Activated B cell treated with CpG ODN at 0.5 μM for 24 hours (primary cell): ENCODE measurements at regions of chr5 and their contacts with region 1.

Region 1: GRCh38 chr5:78984439-78985115 is 533 bp downstream of the ARSB start:
- DNase-seq: peak; percentile 83
- ATAC-seq: peak; percentile 55
- H3K4me3 Mint-ChIP-seq: peak overlapping the region; percentile 90
- H3K27ac Mint-ChIP-seq: peak overlapping the region; percentile 91
- H3K4me1 Mint-ChIP-seq: peaks cover 46% of the 10 kb centered on the region
- H3K27me3 Mint-ChIP-seq: no peaks in the 10 kb centered on the region
- CTCF ChIP-seq: no peak

Region 2: DNA sequence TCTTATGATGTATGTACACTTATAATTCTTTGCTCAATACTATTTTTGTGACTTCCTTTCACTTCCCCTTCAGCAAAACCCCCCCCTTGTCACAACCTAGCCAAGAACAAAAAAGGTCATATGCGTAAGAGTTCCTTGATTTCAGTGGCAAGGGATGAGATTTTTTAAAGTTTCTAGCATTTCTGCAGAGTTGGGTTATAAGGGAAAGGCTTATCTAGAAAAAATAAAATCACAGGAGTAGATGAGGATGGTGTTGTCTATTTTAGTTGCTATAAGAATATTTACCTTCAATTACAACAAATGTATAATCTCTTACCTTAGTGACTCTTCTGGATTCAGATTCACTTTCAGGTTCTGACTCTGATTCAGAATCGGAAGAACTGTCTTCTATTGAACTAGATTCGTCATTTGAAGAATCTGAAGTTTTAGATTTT is 874.7 kb before region 1 on chr5:
- CTCF ChIA-PET with region 1: no interaction called
- POLR2A ChIA-PET with region 1: no interaction called
- intact Hi-C with region 1: loop called (anchors 5 kb)
- DNase-seq: no peak
- ATAC-seq: peak; percentile 76
- H3K4me3 Mint-ChIP-seq: peak overlapping the region; percentile 75
- H3K27ac Mint-ChIP-seq: peak overlapping the region; percentile 87
- H3K4me1 Mint-ChIP-seq: peaks cover 69% of the 10 kb centered on the region
- H3K27me3 Mint-ChIP-seq: no peaks in the 10 kb centered on the region
- CTCF ChIP-seq: no peak

Region 3: GRCh38 chr5:78574731-78575161 is 409.8 kb before region 1 on chr5:
- CTCF ChIA-PET with region 1: no interaction called
- POLR2A ChIA-PET with region 1: interaction called, 10 read pairs
- intact Hi-C with region 1: no loop called
- DNase-seq: no peak
- ATAC-seq: peak; percentile 63
- H3K4me3 Mint-ChIP-seq: no peak overlapping the region
- H3K27ac Mint-ChIP-seq: peak overlapping the region; percentile 82
- H3K4me1 Mint-ChIP-seq: peaks cover 27% of the 10 kb centered on the region
- H3K27me3 Mint-ChIP-seq: no peaks in the 10 kb centered on the region
- CTCF ChIP-seq: no peak

Region 4: DNA sequence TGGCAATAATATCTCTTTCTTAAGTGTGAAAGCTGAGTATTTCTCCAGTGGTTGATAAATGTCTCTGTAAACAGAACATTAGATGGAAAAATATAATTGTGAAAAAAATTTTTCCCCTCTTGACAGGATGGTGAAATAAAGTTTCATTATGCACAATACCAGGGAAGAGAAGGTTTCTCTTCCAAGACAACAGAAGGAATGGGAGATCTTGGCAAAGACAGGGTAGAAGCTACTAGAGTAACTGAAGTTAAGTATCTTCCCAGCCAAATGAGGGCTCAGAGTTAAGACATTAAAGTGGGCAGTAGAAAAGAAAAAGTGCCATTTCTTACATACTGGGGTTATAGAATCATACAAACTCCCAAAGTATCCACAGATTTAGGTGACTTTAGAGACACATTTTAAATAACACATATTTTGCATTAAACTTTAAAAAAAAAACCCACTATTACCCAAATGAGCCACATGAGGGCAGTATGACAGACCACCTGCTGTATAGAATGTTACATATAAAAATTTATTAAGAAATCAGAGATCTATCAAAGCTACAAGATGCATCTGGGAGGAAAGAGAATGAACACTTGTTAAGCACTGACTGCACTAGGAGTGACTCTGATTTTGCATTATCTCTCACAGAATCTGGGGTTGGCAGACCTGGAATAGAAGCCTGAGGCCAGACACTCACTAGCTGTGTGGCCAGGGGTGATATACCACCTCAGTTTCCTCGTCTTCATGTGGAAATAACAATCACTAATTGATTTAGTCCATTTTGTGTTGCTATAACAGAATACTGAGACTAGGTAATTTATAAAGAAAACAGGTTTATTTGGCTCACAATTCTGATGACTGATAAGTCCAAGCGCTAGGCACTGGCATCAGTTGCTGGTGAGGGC is 98.0 kb before region 1 on chr5:
- CTCF ChIA-PET with region 1: no interaction called
- POLR2A ChIA-PET with region 1: interaction called, 3 read pairs
- intact Hi-C with region 1: loop called (anchors 5 kb)
- DNase-seq: no peak
- ATAC-seq: no peak
- H3K4me3 Mint-ChIP-seq: no peak overlapping the region
- H3K27ac Mint-ChIP-seq: peak overlapping the region; percentile 2
- H3K4me1 Mint-ChIP-seq: peaks cover 39% of the 10 kb centered on the region
- H3K27me3 Mint-ChIP-seq: no peaks in the 10 kb centered on the region
- CTCF ChIP-seq: peak; percentile 73

Region 5: GRCh38 chr5:79120216-79120615 is 135.6 kb after region 1 on chr5:
- CTCF ChIA-PET with region 1: no interaction called
- POLR2A ChIA-PET with region 1: no interaction called
- intact Hi-C with region 1: no loop called
- DNase-seq: no peak
- ATAC-seq: no peak
- H3K4me3 Mint-ChIP-seq: no peak overlapping the region
- H3K27ac Mint-ChIP-seq: no peak overlapping the region
- H3K4me1 Mint-ChIP-seq: no peaks in the 10 kb centered on the region
- H3K27me3 Mint-ChIP-seq: peaks cover 5% of the 10 kb centered on the region
- CTCF ChIP-seq: no peak

Region 6: GRCh38 chr5:79133657-79134451 is 149.3 kb after region 1 on chr5:
- CTCF ChIA-PET with region 1: interaction called, 5 read pairs
- POLR2A ChIA-PET with region 1: interaction called, 9 read pairs
- intact Hi-C with region 1: loop called (anchors 1 kb)
- DNase-seq: no peak
- ATAC-seq: peak; percentile 62
- H3K4me3 Mint-ChIP-seq: no peak overlapping the region
- H3K27ac Mint-ChIP-seq: no peak overlapping the region
- H3K4me1 Mint-ChIP-seq: peaks cover 8% of the 10 kb centered on the region
- H3K27me3 Mint-ChIP-seq: peaks cover 5% of the 10 kb centered on the region
- CTCF ChIP-seq: no peak

Region 7: GRCh38 chr5:79612667-79613198 is 628.2 kb after region 1 on chr5:
- CTCF ChIA-PET with region 1: no interaction called
- POLR2A ChIA-PET with region 1: no interaction called
- intact Hi-C with region 1: loop called (anchors 2 kb)
- DNase-seq: no peak
- ATAC-seq: peak; percentile 16
- H3K4me3 Mint-ChIP-seq: peak overlapping the region; percentile 99
- H3K27ac Mint-ChIP-seq: peak overlapping the region; percentile 98
- H3K4me1 Mint-ChIP-seq: peaks cover 34% of the 10 kb centered on the region
- H3K27me3 Mint-ChIP-seq: peaks cover 2% of the 10 kb centered on the region
- CTCF ChIP-seq: no peak

Region 8: DNA sequence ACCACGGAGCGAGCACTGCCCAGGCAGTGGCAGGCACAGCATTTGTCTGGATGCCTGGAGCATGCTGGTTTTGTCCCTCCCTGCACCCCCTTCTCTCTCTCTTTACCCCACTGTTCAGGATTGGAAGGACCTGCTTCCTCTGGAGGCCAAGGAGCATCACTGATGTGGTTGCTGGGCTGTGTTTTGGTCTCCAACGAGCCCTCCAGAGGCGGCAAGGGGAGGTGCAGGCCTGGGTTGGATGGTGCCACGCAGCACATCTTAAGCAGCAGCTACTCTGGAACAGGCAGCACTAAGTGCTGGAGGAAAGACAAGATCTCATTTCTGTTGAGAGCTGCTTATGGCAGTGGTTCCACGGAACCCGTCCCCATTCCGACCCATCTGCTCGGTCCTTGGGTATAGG is 844.7 kb after region 1 on chr5:
- CTCF ChIA-PET with region 1: no interaction called
- POLR2A ChIA-PET with region 1: no interaction called
- intact Hi-C with region 1: no loop called
- DNase-seq: no peak
- ATAC-seq: no peak
- H3K4me3 Mint-ChIP-seq: no peak overlapping the region
- H3K27ac Mint-ChIP-seq: no peak overlapping the region
- H3K4me1 Mint-ChIP-seq: no peaks in the 10 kb centered on the region
- H3K27me3 Mint-ChIP-seq: peaks cover 6% of the 10 kb centered on the region
- CTCF ChIP-seq: no peak